ENCODE measurements at regions of chr1 and their contacts with region 1.

Region 1: GRCh38 chr1:42657971-42658879 is at the start of gene PPIH:
- DNase-seq: peak; percentile 87 to 97
- ATAC-seq: peak; percentile 97 to 99 (median 98)
- H3K4me3 ChIP-seq: peak within 1 kb of the TSS; percentile 81
- H3K4me3 Mint-ChIP-seq: peak within 1 kb of the TSS; percentile 98
- H3K27ac ChIP-seq: peak within 1 kb of the TSS; percentile 52
- H3K27ac Mint-ChIP-seq: peak within 1 kb of the TSS; percentile 93 to 94
- H3K4me1 ChIP-seq: peaks cover 17% of the 10 kb centered on the region
- H3K4me1 Mint-ChIP-seq: peaks cover 38 to 45% of the 10 kb centered on the region in 2 donors
- H3K27me3 ChIP-seq: no peaks in the 10 kb centered on the region
- H3K27me3 Mint-ChIP-seq: no peaks in the 10 kb centered on the region
- CTCF ChIP-seq: no peak
- total RNA-seq, gene PPIH: 41.2 to 50.3 (median 43.1) TPM

Region 2: DNA sequence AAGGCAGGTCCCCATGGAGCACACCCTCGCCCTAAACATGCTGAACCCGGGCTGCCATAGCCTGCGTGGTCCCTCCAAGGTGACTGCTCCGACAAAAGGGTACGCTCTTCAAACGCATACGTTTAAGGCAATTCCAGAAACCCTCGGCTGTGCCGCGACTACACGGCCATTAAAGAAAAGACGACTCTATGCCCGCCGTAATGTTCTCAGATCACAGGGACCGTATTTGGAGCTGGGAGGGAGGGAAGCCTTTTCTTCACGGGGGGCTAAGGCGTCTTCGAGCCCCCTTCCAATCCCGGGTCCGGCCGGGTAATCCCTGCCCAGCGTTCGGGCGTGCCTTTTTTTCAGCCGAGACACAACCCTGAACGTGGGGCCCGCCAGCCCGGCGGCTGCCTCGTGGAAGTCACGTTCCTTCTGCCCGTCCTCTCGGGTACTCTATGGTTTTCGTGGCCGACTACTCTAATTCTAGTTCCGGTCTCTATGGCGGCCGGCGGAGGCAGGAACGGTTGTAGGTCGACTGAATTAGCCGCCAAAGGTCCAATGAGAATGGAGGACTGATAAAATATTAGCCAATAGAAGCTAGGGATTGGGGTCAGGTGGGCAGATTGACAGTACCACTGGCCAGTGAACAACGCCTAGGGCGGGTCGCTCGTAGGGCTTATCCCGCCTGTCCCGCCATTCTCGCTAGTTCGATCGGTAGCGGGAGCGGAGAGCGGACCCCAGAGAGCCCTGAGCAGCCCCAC is 23.7 kb after region 1 on chr1 and contains the start of gene YBX1:
- intact Hi-C with region 1: loop called (anchors 1 kb)
- DNase-seq: peak; percentile 96 to 97
- ATAC-seq: peak; percentile 88 to 96 (median 91)
- H3K4me3 ChIP-seq: peak within 1 kb of the TSS; percentile 79
- H3K4me3 Mint-ChIP-seq: peak within 1 kb of the TSS; percentile 100
- H3K27ac ChIP-seq: peak within 1 kb of the TSS; percentile 88
- H3K27ac Mint-ChIP-seq: peak within 1 kb of the TSS; percentile 93 to 98
- H3K4me1 ChIP-seq: peaks cover 16% of the 10 kb centered on the region
- H3K4me1 Mint-ChIP-seq: peaks cover 46 to 51% of the 10 kb centered on the region in 2 donors
- H3K27me3 ChIP-seq: no peaks in the 10 kb centered on the region
- H3K27me3 Mint-ChIP-seq: no peaks in the 10 kb centered on the region
- CTCF ChIP-seq: no peak
- total RNA-seq, gene YBX1: 239 to 305 (median 279) TPM

Measured in natural killer cell (primary cell).